GM12878 (cell line): ENCODE measurements at regions of chr1 and their contacts with region 1.

Region 1: DNA sequence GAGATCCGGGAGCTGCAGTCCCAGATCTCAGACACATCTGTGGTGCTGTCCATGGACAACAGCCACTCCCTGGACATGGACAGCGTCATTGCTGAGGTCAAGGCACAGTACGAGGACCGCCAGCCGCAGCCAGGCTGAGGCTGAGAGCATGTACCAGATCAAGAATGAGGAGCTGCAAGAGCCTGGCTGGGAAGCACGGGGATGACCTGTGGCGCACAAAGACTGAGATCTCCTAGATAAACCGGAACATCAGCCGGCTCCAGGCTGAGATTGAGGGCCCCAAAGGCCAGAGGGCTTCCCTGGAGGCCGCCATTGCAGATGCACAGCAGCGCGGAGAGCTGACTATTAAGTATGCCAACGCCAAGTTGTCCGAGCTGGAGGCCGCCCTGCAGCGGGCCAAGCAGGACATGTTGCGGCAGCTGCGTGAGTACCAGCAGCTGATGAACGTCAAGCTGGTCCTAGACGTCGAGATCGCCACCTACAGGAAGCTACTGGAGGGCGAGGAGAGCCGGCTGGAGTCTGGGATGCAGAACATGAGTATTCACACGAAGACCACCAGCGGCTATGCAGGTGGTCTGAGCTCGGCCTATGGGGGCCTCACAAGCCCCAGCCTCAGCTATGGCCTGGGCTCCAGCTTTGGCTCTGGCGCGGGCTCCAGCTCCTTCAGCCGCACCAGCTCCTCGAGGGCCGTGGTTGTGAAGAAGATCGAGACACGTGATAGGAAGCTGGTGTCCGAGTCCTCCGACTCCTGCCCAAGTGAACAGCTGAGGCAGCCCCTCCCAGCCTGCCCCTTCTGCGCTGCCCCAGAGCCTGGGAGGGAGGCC is 25.5 kb downstream of the ETV3L start:
- DNase-seq: no peak
- ATAC-seq: peak; percentile 70
- H3K4me3 ChIP-seq: no peak overlapping the region
- H3K27ac ChIP-seq: no peak overlapping the region
- H3K4me1 ChIP-seq: no peaks in the 10 kb centered on the region
- H3K27me3 ChIP-seq: no peaks in the 10 kb centered on the region
- CTCF ChIP-seq: peak; percentile 45 to 73 (median 60); a peak in 5 of 6 replicates
- EP300 ChIP-seq: no peak
- POLR2A ChIP-seq: no peak
- RAD21 ChIP-seq: peak; percentile 45

Region 2: DNA sequence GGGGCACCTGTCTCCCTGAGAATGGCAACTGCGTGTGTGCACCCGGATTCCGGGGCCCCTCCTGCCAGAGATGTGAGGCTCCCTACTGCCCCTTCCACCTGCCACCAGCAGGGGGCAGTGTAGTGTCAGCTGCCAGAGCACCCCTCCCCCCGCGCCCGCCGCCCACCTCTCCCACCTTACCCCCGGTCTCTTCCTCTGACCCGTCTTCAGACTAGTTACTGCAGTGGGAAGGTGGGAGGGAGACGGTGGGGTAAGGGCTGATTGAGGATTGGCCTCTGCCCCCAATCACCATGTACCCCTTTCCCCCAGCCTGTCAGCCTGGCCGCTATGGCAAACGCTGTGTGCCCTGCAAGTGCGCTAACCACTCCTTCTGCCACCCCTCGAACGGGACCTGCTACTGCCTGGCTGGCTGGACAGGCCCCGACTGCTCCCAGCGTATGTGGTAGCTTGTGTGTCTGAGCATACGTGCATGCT is 163.8 kb before region 1 on chr1:
- CTCF ChIA-PET with region 1: interaction called, 47 read pairs
- POLR2A ChIA-PET with region 1: interaction called, 4 read pairs
- RAD21 ChIA-PET with region 1: interaction called, 33 read pairs
- SMC1A ChIA-PET with region 1: interaction called, 19 read pairs
- in situ Hi-C with region 1: no loop called
- intact Hi-C with region 1: loop called (anchors 5 kb)
- DNase-seq: no peak
- ATAC-seq: peak; percentile 77
- H3K4me3 ChIP-seq: no peak overlapping the region
- H3K27ac ChIP-seq: no peak overlapping the region
- H3K4me1 ChIP-seq: no peaks in the 10 kb centered on the region
- H3K27me3 ChIP-seq: peaks cover 2% of the 10 kb centered on the region in 2 experiments; a peak in 3 of 4 replicates
- CTCF ChIP-seq: peak; percentile 69 to 97 (median 70)
- EP300 ChIP-seq: no peak
- POLR2A ChIP-seq: no peak
- RAD21 ChIP-seq: peak; percentile 43

Region 3: DNA sequence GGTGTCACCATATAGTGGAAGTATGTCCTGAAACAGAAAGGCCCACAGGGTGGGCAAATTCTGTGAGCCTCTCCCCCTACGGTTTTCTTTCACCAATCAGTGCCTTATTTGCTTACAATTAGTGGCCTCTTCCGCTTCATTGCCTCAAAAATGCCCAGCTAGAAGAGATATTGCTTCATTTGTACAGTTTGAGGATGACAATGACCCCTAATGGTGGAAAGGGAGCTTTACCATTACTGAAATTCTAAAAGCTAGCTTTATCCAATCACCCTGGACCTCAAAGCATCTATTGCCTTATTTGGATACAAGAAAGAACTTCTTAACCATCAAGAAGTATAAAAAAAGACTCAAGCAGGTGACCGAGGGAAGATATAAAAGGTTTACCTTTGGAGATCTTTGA is 104.1 kb before region 1 on chr1:
- CTCF ChIA-PET with region 1: interaction called, 14 read pairs
- POLR2A ChIA-PET with region 1: no interaction called
- RAD21 ChIA-PET with region 1: interaction called, 7 read pairs
- SMC1A ChIA-PET with region 1: interaction called, 7 read pairs
- in situ Hi-C with region 1: no loop called
- intact Hi-C with region 1: loop called (anchors 5 kb)
- DNase-seq: no peak
- ATAC-seq: peak; percentile 36; the same call in 1 of the 3 replicates
- H3K4me3 ChIP-seq: no peak overlapping the region
- H3K27ac ChIP-seq: no peak overlapping the region
- H3K4me1 ChIP-seq: no peaks in the 10 kb centered on the region
- H3K27me3 ChIP-seq: no peaks in the 10 kb centered on the region
- CTCF ChIP-seq: peak in 2 of 3 experiments; percentile 27 to 29; a peak in 3 of 6 replicates
- EP300 ChIP-seq: no peak
- POLR2A ChIP-seq: no peak
- RAD21 ChIP-seq: 0 out of 2 replicates have a peak, but pooled peaks have one; percentile 18

Region 4: GRCh38 chr1:157040802-157041201 is 33.4 kb before region 1 on chr1:
- CTCF ChIA-PET with region 1: interaction called, 12 read pairs
- POLR2A ChIA-PET with region 1: interaction called, 5 read pairs
- RAD21 ChIA-PET with region 1: interaction called, 9 read pairs
- SMC1A ChIA-PET with region 1: interaction called, 3 read pairs
- in situ Hi-C with region 1: no loop called
- intact Hi-C with region 1: no loop called
- DNase-seq: no peak
- ATAC-seq: peak; percentile 36; the same call in 2 of the 3 replicates
- H3K4me3 ChIP-seq: no peak overlapping the region
- H3K27ac ChIP-seq: peak overlapping the region; percentile 22; the same call in 1 of the 2 replicates
- H3K4me1 ChIP-seq: no peaks in the 10 kb centered on the region
- H3K27me3 ChIP-seq: no peaks in the 10 kb centered on the region; a peak in 1 of 4 replicates
- CTCF ChIP-seq: no peak
- EP300 ChIP-seq: no peak
- POLR2A ChIP-seq: no peak
- RAD21 ChIP-seq: no peak

Region 5: DNA sequence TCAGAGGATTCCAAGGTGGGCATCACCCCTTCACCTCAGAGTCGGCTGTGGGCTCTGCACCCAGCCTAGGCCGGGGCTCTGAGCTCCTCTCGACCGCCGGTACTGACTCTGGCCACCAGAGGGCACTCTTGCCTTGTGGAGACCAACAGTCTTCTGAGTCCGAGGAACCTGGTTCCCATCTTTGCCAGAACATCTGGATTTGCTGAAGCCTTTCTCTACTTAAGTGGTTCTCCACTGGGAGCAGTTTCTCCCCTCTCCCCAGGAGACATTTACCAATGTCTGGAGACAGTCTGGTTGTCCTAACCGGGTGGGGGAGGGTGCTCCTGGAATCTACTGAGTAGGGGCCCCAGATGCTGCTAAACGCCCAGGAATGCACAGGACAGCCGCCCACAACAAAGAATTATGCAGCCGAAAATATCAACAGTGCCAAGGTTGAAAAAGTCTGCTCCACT is 16.1 kb after region 1 on chr1:
- CTCF ChIA-PET with region 1: interaction called, 29 read pairs
- POLR2A ChIA-PET with region 1: no interaction called
- RAD21 ChIA-PET with region 1: interaction called, 7 read pairs
- SMC1A ChIA-PET with region 1: interaction called, 6 read pairs
- in situ Hi-C with region 1: no loop called
- intact Hi-C with region 1: no loop called
- DNase-seq: no peak
- ATAC-seq: peak; percentile 98
- H3K4me3 ChIP-seq: no peak overlapping the region
- H3K27ac ChIP-seq: no peak overlapping the region
- H3K4me1 ChIP-seq: no peaks in the 10 kb centered on the region
- H3K27me3 ChIP-seq: no peaks in the 10 kb centered on the region; a peak in 1 of 4 replicates
- CTCF ChIP-seq: peak; percentile 93 to 96 (median 95)
- EP300 ChIP-seq: no peak
- POLR2A ChIP-seq: no peak
- RAD21 ChIP-seq: peak; percentile 97